MCF 10A (cell line): ENCODE measurements at regions of chr10 and their contacts with region 1.

Region 1: DNA sequence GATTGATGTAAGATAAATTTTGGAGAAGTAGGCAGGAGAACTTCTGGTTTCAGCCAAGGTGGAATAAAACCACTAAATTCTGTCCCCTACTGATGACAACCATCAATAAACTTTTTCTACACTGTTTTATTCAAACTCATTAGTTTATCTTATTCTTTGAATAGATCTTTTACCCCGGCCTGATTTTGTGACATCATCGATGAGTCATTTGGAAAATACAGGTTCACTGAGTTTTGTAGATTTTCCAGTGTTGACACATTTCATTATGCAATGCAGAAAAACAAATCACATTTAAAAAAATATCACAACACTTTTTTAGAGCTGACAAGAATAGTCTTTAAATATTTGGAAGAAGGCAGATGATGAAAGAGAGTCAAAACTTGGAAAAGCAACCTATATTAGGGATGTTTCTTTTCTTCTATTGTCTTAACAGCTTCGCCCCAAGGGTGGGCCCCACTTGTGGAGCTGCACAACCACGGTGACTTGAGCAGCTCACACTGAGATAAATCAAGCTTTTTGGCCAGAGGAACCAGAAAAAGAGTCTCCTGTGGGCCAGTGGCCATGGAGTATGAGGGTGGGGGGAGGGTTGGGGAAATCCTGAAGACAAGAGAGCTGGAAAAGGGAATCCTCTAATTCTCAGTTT is 112.8 kb downstream of the PTEN start:
- DNase-seq: peak; percentile 48
- H3K4me3 Mint-ChIP-seq: no peak overlapping the region
- H3K27ac Mint-ChIP-seq: peak overlapping the region; percentile 3
- H3K4me1 Mint-ChIP-seq: peaks cover 9% of the 10 kb centered on the region
- H3K27me3 Mint-ChIP-seq: no peaks in the 10 kb centered on the region
- CTCF ChIP-seq: no peak

Region 2: DNA sequence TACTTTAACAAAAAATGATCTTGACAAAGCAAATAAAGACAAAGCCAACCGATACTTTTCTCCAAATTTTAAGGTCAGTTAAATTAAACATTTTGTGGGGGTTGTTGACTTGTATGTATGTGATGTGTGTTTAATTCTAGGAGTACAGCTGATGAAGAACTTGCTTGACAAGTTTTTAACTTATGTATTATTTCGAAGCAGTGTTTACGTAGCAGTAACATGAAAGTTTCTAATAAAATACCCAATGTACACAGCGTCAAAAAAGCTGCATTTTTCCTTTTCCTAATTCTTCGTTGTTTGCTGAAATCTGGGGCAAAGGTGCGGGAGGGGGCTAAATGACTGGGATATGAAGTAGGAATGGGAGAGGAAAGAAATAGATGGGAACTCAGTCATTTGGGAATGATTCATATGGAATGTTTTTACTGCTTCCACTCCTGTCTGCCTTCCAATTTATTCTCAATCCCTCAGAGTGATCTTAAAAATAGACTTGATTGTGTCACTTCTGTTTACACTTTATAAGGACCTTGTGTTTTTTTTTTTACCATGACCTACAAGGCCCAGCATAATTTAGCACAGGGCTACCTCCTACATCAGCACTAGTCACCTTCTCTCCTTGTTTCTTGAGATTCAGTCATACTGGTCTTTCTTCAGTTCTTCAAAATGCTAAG is 15.0 kb before region 1 on chr10:
- CTCF ChIA-PET with region 1: no interaction called
- POLR2A ChIA-PET with region 1: interaction called, 10 read pairs
- intact Hi-C with region 1: no loop called
- DNase-seq: peak; percentile 53
- H3K4me3 Mint-ChIP-seq: no peak overlapping the region
- H3K27ac Mint-ChIP-seq: peak overlapping the region; percentile 68
- H3K4me1 Mint-ChIP-seq: peaks cover 16% of the 10 kb centered on the region
- H3K27me3 Mint-ChIP-seq: no peaks in the 10 kb centered on the region
- CTCF ChIP-seq: no peak

Region 3: DNA sequence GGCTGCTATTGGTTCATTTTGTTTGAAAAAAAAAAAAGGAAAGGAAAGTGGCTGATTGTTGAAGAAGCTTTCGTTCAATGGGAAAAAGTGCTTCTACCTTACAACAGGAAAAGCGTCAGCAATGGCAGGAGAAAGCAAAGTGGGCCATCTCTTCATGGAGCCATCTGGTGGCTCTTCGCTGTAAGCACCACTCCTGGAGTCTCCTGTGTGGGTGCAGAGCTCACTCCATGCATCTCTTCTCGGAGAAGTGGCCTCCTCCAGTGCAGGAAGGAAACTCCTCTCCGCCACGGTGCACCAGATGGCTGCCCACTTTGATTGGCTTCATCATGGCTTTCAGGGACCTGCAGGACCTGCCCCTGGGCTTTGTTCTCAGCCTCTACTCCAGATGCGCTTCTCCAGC is 138.1 kb after region 1 on chr10:
- CTCF ChIA-PET with region 1: no interaction called
- POLR2A ChIA-PET with region 1: no interaction called
- intact Hi-C with region 1: no loop called
- DNase-seq: peak; percentile 50
- H3K4me3 Mint-ChIP-seq: no peak overlapping the region
- H3K27ac Mint-ChIP-seq: no peak overlapping the region
- H3K4me1 Mint-ChIP-seq: peaks cover 11% of the 10 kb centered on the region
- H3K27me3 Mint-ChIP-seq: no peaks in the 10 kb centered on the region
- CTCF ChIP-seq: no peak